MCF 10A (cell line): ENCODE measurements at regions of chr4 and their contacts with region 1.

Region 1: GRCh38 chr4:153466081-153466948 is at the start of gene TMEM131L:
- DNase-seq: peak; percentile 66
- H3K4me3 Mint-ChIP-seq: peak within 1 kb of the TSS; percentile 87
- H3K27ac Mint-ChIP-seq: peak within 1 kb of the TSS; percentile 79
- H3K4me1 Mint-ChIP-seq: peaks cover 20% of the 10 kb centered on the region
- H3K27me3 Mint-ChIP-seq: no peaks in the 10 kb centered on the region
- CTCF ChIP-seq: no peak
- total RNA-seq, gene TMEM131L: 7.8 and 10.1 TPM in 2 replicates

Region 2: GRCh38 chr4:153344131-153345010 is 121.9 kb before region 1 on chr4 and contains the start of gene MND1:
- CTCF ChIA-PET with region 1: interaction called, 44 read pairs
- POLR2A ChIA-PET with region 1: interaction called, 47 read pairs
- intact Hi-C with region 1: loop called (anchors 1 kb)
- DNase-seq: peak; percentile 84
- H3K4me3 Mint-ChIP-seq: peak within 1 kb of the TSS; percentile 84
- H3K27ac Mint-ChIP-seq: peak within 1 kb of the TSS; percentile 16
- H3K4me1 Mint-ChIP-seq: peaks cover 33% of the 10 kb centered on the region
- H3K27me3 Mint-ChIP-seq: no peaks in the 10 kb centered on the region
- CTCF ChIP-seq: peak; percentile 98
- total RNA-seq, gene MND1: 4.8 and 9.7 TPM in 2 replicates

Region 3: GRCh38 chr4:153398713-153399112 is 67.6 kb before region 1 on chr4:
- CTCF ChIA-PET with region 1: interaction called, 3 read pairs
- POLR2A ChIA-PET with region 1: interaction called, 20 read pairs
- intact Hi-C with region 1: no loop called
- DNase-seq: peak; percentile 46
- H3K4me3 Mint-ChIP-seq: peak overlapping the region; percentile 21
- H3K27ac Mint-ChIP-seq: peak overlapping the region; percentile 80
- H3K4me1 Mint-ChIP-seq: peaks cover 14% of the 10 kb centered on the region
- H3K27me3 Mint-ChIP-seq: no peaks in the 10 kb centered on the region
- CTCF ChIP-seq: no peak

Region 4: GRCh38 chr4:153432968-153433753 is 33.2 kb before region 1 on chr4:
- CTCF ChIA-PET with region 1: interaction called, 8 read pairs
- POLR2A ChIA-PET with region 1: interaction called, 14 read pairs
- intact Hi-C with region 1: no loop called
- DNase-seq: peak; percentile 95
- H3K4me3 Mint-ChIP-seq: peak overlapping the region; percentile 57
- H3K27ac Mint-ChIP-seq: peak overlapping the region; percentile 72
- H3K4me1 Mint-ChIP-seq: peaks cover 7% of the 10 kb centered on the region
- H3K27me3 Mint-ChIP-seq: no peaks in the 10 kb centered on the region
- CTCF ChIP-seq: peak; percentile 53

Region 5: DNA sequence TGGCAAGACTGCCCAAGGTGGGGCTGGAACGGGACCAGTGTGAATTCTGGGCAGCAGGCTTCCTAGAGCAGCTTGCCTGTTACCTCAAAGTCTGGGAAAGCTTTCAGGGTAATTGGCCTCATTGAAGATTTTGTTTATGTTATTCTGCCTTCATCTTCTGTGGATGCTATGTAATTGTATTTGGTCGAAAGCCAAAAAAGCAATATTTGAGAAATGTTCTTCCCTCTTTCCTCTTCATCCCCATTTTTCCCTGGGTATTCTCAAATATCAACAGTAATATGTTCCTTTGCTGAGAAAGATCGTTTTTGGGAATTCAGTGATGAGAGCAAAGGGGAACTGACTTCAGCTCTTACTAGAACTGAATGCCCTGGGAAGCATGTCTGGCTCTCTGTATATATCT is 12.8 kb after region 1 on chr4:
- CTCF ChIA-PET with region 1: interaction called, 8 read pairs
- POLR2A ChIA-PET with region 1: interaction called, 25 read pairs
- intact Hi-C with region 1: no loop called
- DNase-seq: no peak
- H3K4me3 Mint-ChIP-seq: no peak overlapping the region
- H3K27ac Mint-ChIP-seq: no peak overlapping the region
- H3K4me1 Mint-ChIP-seq: no peaks in the 10 kb centered on the region
- H3K27me3 Mint-ChIP-seq: no peaks in the 10 kb centered on the region
- CTCF ChIP-seq: no peak

Region 6: GRCh38 chr4:153488006-153488891 is 21.9 kb after region 1 on chr4:
- CTCF ChIA-PET with region 1: interaction called, 24 read pairs
- POLR2A ChIA-PET with region 1: interaction called, 196 read pairs
- intact Hi-C with region 1: loop called (anchors 1 kb)
- DNase-seq: no peak
- H3K4me3 Mint-ChIP-seq: peak overlapping the region; percentile 44
- H3K27ac Mint-ChIP-seq: peak overlapping the region; percentile 93
- H3K4me1 Mint-ChIP-seq: peaks cover 53% of the 10 kb centered on the region
- H3K27me3 Mint-ChIP-seq: no peaks in the 10 kb centered on the region
- CTCF ChIP-seq: no peak

Region 7: DNA sequence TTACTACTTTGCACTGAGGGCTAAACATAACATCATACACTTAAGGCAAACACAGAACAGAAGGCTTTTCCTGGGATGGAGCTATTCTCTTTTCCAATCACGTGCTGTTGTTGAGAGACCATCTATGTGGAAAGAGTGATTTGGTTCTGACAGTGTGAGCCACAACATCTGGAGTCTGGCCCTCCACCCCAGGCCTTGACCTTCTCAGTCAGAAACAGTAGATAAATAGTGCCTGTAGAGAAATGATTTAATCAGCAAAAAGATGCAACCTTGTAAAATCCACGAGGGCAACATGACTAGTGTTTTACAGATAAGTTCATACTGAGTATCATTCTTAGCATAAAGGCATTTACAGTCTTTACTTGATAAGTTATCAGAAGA is 333.4 kb after region 1 on chr4:
- CTCF ChIA-PET with region 1: no interaction called
- POLR2A ChIA-PET with region 1: no interaction called
- intact Hi-C with region 1: no loop called
- DNase-seq: no peak
- H3K4me3 Mint-ChIP-seq: no peak overlapping the region
- H3K27ac Mint-ChIP-seq: no peak overlapping the region
- H3K4me1 Mint-ChIP-seq: no peaks in the 10 kb centered on the region
- H3K27me3 Mint-ChIP-seq: no peaks in the 10 kb centered on the region
- CTCF ChIP-seq: no peak